ENCODE measurements at regions of chr12 and their contacts with region 1.

Region 1: GRCh38 chr12:9647825-9648700 is 21.4 kb upstream of the CLEC2D start:
- DNase-seq: peak; percentile 75 to 97 (median 88)
- ATAC-seq: peak; percentile 74
- H3K4me3 ChIP-seq: peak overlapping the region; percentile 90
- H3K4me3 Mint-ChIP-seq: peak overlapping the region; percentile 94
- H3K27ac ChIP-seq: peak overlapping the region; percentile 83 to 90
- H3K27ac Mint-ChIP-seq: peak overlapping the region; percentile 89
- H3K4me1 ChIP-seq: peaks cover 23% of the 10 kb centered on the region
- H3K4me1 Mint-ChIP-seq: peaks cover 62% of the 10 kb centered on the region
- H3K27me3 ChIP-seq: no peaks in the 10 kb centered on the region
- H3K27me3 Mint-ChIP-seq: no peaks in the 10 kb centered on the region
- CTCF ChIP-seq: no peak

Region 2: GRCh38 chr12:9634177-9634803 is 13.8 kb before region 1 on chr12:
- CTCF ChIA-PET with region 1: interaction called, 5 read pairs
- POLR2A ChIA-PET with region 1: interaction called, 77 read pairs
- intact Hi-C with region 1: loop called (anchors 1 to 2 kb)
- DNase-seq: peak; percentile 55 to 91 (median 78)
- ATAC-seq: peak; percentile 89
- H3K4me3 ChIP-seq: no peak overlapping the region
- H3K4me3 Mint-ChIP-seq: peak overlapping the region; percentile 79
- H3K27ac ChIP-seq: peak overlapping the region in 1 of 2 donors; percentile 37
- H3K27ac Mint-ChIP-seq: peak overlapping the region; percentile 77
- H3K4me1 ChIP-seq: peaks cover 45% of the 10 kb centered on the region
- H3K4me1 Mint-ChIP-seq: peaks cover 59% of the 10 kb centered on the region
- H3K27me3 ChIP-seq: no peaks in the 10 kb centered on the region
- H3K27me3 Mint-ChIP-seq: no peaks in the 10 kb centered on the region
- CTCF ChIP-seq: peak; percentile 87

Region 3: GRCh38 chr12:9687228-9687627 is 39.2 kb after region 1 on chr12:
- CTCF ChIA-PET with region 1: interaction called, 4 read pairs
- POLR2A ChIA-PET with region 1: interaction called, 238 read pairs
- intact Hi-C with region 1: loop called in 1 of 2 experiments (anchors 5 kb)
- DNase-seq: peak in 3 of 14 experiments; percentile 20 to 52 (median 45)
- ATAC-seq: peak; percentile 39
- H3K4me3 ChIP-seq: no peak overlapping the region
- H3K4me3 Mint-ChIP-seq: peak overlapping the region; percentile 7
- H3K27ac ChIP-seq: peak overlapping the region in 1 of 2 donors; percentile 35
- H3K27ac Mint-ChIP-seq: peak overlapping the region; percentile 81
- H3K4me1 ChIP-seq: peaks cover 41% of the 10 kb centered on the region
- H3K4me1 Mint-ChIP-seq: peaks cover 73% of the 10 kb centered on the region
- H3K27me3 ChIP-seq: no peaks in the 10 kb centered on the region
- H3K27me3 Mint-ChIP-seq: no peaks in the 10 kb centered on the region
- CTCF ChIP-seq: no peak

Region 4: DNA sequence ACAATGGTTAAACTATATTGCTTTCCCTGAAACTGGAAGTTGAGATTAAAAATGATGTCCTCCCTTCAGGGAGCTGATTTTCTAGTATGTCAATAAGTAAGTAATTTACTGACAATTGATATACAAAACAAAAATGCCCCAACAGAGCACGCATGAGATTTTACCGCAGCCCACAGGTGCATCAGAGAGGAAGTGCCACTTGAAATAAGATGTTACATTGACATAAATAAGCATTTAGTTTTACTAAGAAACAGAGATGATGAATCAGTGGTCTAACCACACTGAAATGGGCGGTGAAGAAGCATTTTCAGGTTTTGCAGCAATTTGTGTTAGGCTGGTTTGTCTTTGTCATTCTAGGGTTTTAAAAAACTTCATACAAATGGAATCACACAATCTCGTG is 93.7 kb after region 1 on chr12:
- CTCF ChIA-PET with region 1: interaction called, 12 read pairs
- POLR2A ChIA-PET with region 1: interaction called, 198 read pairs
- intact Hi-C with region 1: loop called in 1 of 2 experiments (anchors 1 kb)
- DNase-seq: peak; percentile 38 to 94 (median 64)
- ATAC-seq: peak; percentile 65
- H3K4me3 ChIP-seq: no peak overlapping the region
- H3K4me3 Mint-ChIP-seq: peak overlapping the region; percentile 78
- H3K27ac ChIP-seq: peak overlapping the region; percentile 46 to 75
- H3K27ac Mint-ChIP-seq: peak overlapping the region; percentile 91
- H3K4me1 ChIP-seq: peaks cover 37% of the 10 kb centered on the region
- H3K4me1 Mint-ChIP-seq: peaks cover 70% of the 10 kb centered on the region
- H3K27me3 ChIP-seq: no peaks in the 10 kb centered on the region
- H3K27me3 Mint-ChIP-seq: no peaks in the 10 kb centered on the region
- CTCF ChIP-seq: no peak

Region 5: GRCh38 chr12:9869307-9870161 is 221.5 kb after region 1 on chr12 and contains the start of gene CLEC2B:
- CTCF ChIA-PET with region 1: no interaction called
- POLR2A ChIA-PET with region 1: interaction called, 57 read pairs
- intact Hi-C with region 1: no loop called
- DNase-seq: peak in 4 of 14 experiments; percentile 33 to 86 (median 78)
- ATAC-seq: peak; percentile 68
- H3K4me3 ChIP-seq: peak within 1 kb of the TSS; percentile 76
- H3K4me3 Mint-ChIP-seq: peak within 1 kb of the TSS; percentile 92
- H3K27ac ChIP-seq: peak within 1 kb of the TSS; percentile 90 to 91
- H3K27ac Mint-ChIP-seq: peak within 1 kb of the TSS; percentile 98
- H3K4me1 ChIP-seq: peaks cover 7% of the 10 kb centered on the region
- H3K4me1 Mint-ChIP-seq: peaks cover 34% of the 10 kb centered on the region
- H3K27me3 ChIP-seq: no peaks in the 10 kb centered on the region
- H3K27me3 Mint-ChIP-seq: no peaks in the 10 kb centered on the region
- CTCF ChIP-seq: no peak
- total RNA-seq, gene CLEC2B: 152 to 155 TPM